Activated B cell treated with CpG ODN at 0.5 μM for 24 hours (primary cell): ENCODE measurements at regions of chr16 and their contacts with region 1.

Region 1: GRCh38 chr16:714558-715476 is at the start of gene METRN:
- DNase-seq: peak; percentile 89
- ATAC-seq: peak; percentile 91
- H3K4me3 Mint-ChIP-seq: peak within 1 kb of the TSS; percentile 68
- H3K27ac Mint-ChIP-seq: no peak within 1 kb of the TSS
- H3K4me1 Mint-ChIP-seq: peaks cover 16% of the 10 kb centered on the region
- H3K27me3 Mint-ChIP-seq: peaks cover 7% of the 10 kb centered on the region
- CTCF ChIP-seq: no peak
- total RNA-seq, gene METRN: 5.0 and 6.7 TPM in 2 replicates

Region 2: GRCh38 chr16:468068-468821 is 246.6 kb before region 1 on chr16:
- CTCF ChIA-PET with region 1: no interaction called
- POLR2A ChIA-PET with region 1: no interaction called
- intact Hi-C with region 1: no loop called
- DNase-seq: no peak
- ATAC-seq: no peak
- H3K4me3 Mint-ChIP-seq: no peak overlapping the region
- H3K27ac Mint-ChIP-seq: no peak overlapping the region
- H3K4me1 Mint-ChIP-seq: no peaks in the 10 kb centered on the region
- H3K27me3 Mint-ChIP-seq: no peaks in the 10 kb centered on the region
- CTCF ChIP-seq: no peak

Region 3: GRCh38 chr16:667780-668518 is 46.9 kb before region 1 on chr16 and contains the start of gene RHOT2:
- CTCF ChIA-PET with region 1: no interaction called
- POLR2A ChIA-PET with region 1: no interaction called
- intact Hi-C with region 1: loop called (anchors 1 kb)
- DNase-seq: peak; percentile 96
- ATAC-seq: peak; percentile 98
- H3K4me3 Mint-ChIP-seq: peak within 1 kb of the TSS; percentile 80
- H3K27ac Mint-ChIP-seq: peak within 1 kb of the TSS; percentile 80
- H3K4me1 Mint-ChIP-seq: peaks cover 12% of the 10 kb centered on the region
- H3K27me3 Mint-ChIP-seq: no peaks in the 10 kb centered on the region
- CTCF ChIP-seq: peak; percentile 7
- total RNA-seq, gene RHOT2: 141 and 170 TPM in 2 replicates

Region 4: GRCh38 chr16:788394-789126 is 73.7 kb after region 1 on chr16 and contains the start of gene CHTF18:
- CTCF ChIA-PET with region 1: interaction called, 22 read pairs
- POLR2A ChIA-PET with region 1: interaction called, 4 read pairs
- intact Hi-C with region 1: loop called (anchors 1 kb)
- DNase-seq: peak; percentile 94
- ATAC-seq: peak; percentile 97
- H3K4me3 Mint-ChIP-seq: peak within 1 kb of the TSS; percentile 86
- H3K27ac Mint-ChIP-seq: peak within 1 kb of the TSS; percentile 56
- H3K4me1 Mint-ChIP-seq: peaks cover 7% of the 10 kb centered on the region
- H3K27me3 Mint-ChIP-seq: no peaks in the 10 kb centered on the region
- CTCF ChIP-seq: no peak
- total RNA-seq, gene CHTF18: 42.4 and 45.5 TPM in 2 replicates

Region 5: GRCh38 chr16:877991-878784 is 163.4 kb after region 1 on chr16:
- CTCF ChIA-PET with region 1: no interaction called
- POLR2A ChIA-PET with region 1: no interaction called
- intact Hi-C with region 1: loop called (anchors 5 kb)
- DNase-seq: no peak
- ATAC-seq: peak; percentile 45
- H3K4me3 Mint-ChIP-seq: no peak overlapping the region
- H3K27ac Mint-ChIP-seq: no peak overlapping the region
- H3K4me1 Mint-ChIP-seq: peaks cover 15% of the 10 kb centered on the region
- H3K27me3 Mint-ChIP-seq: no peaks in the 10 kb centered on the region
- CTCF ChIP-seq: no peak

Region 6: DNA sequence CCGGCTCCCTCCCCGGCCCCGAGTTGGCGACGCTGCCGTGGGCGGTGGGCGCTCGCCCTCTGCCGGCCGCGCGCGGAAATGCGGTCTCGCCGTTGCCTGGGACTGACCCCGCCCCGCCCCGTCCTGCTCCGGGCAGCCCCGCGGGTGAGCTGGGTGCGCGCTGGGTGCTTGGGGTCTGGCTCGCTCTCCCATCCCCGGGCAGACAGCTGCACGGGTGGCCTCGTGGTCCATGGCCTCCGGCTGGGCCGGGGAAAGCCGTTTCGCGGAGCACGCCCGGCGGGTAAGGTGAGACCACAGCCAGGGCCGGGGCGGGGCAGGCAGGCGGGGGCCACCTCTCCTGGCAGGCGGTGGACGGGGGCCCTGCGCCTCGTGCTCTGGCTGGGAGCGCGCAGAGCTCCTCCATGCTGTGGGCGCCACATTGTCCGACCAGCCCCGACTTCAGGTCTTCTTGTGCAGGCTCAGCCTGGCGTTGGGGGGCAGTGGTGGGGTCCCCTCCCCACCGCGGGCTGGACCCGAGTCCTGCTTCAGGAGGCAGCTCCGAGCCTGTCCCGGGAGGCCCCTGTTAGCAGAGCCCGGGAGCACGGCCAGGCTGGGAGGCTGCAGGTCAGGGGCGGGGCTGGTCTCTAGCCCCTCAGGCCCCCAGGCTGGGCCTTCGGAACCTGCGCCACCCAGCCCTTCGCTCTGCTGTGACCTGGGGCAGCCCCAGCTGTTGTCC is 388.3 kb after region 1 on chr16:
- CTCF ChIA-PET with region 1: interaction called, 13 read pairs
- POLR2A ChIA-PET with region 1: no interaction called
- intact Hi-C with region 1: loop called (anchors 1 kb)
- DNase-seq: peak; percentile 77
- ATAC-seq: peak; percentile 91
- H3K4me3 Mint-ChIP-seq: no peak overlapping the region
- H3K27ac Mint-ChIP-seq: no peak overlapping the region
- H3K4me1 Mint-ChIP-seq: no peaks in the 10 kb centered on the region
- H3K27me3 Mint-ChIP-seq: peaks cover 9% of the 10 kb centered on the region
- CTCF ChIP-seq: no peak